Endothelial cell of umbilical vein (primary cell): ENCODE measurements at regions of chr7 and their contacts with region 1.

Region 1: GRCh38 chr7:636396-636795 is 90.1 kb upstream of the DNAAF5 start:
- DNase-seq: no peak
- H3K4me3 ChIP-seq: no peak overlapping the region
- H3K27ac ChIP-seq: no peak overlapping the region
- H3K4me1 ChIP-seq: no peaks in the 10 kb centered on the region
- H3K27me3 ChIP-seq: no peaks in the 10 kb centered on the region
- CTCF ChIP-seq: peak; percentile 47 to 51
- POLR2A ChIP-seq: no peak

Region 2: GRCh38 chr7:322111-322671 is 314.2 kb before region 1 on chr7:
- CTCF ChIA-PET with region 1: interaction called, 19 read pairs
- POLR2A ChIA-PET with region 1: no interaction called
- dilution Hi-C with region 1: no loop called
- intact Hi-C with region 1: loop called (anchors 1 kb)
- DNase-seq: peak; percentile 41
- H3K4me3 ChIP-seq: no peak overlapping the region
- H3K27ac ChIP-seq: no peak overlapping the region
- H3K4me1 ChIP-seq: no peaks in the 10 kb centered on the region
- H3K27me3 ChIP-seq: peaks cover 0 to 11% of the 10 kb centered on the region in 2 experiments
- CTCF ChIP-seq: peak; percentile 73 to 79
- POLR2A ChIP-seq: no peak

Region 3: DNA sequence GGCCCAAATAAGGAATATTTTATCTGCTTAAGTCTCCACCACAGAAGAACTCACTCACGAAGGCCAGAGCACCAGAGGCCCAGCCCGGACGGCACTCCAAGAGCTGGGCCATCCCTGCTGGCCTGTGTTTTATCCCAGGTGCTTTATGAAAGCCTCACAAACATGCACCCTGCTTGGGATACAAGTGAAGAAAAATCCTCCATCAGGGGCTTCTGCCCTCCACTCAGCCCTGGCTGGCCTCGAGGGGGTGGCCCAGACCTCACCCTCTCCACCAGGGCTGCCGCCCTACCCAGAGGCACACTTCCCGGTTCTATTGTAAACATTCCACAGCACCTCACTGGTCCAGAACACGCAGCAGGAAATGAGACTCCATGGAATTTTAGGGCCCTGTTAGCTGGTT is 70.3 kb after region 1 on chr7:
- CTCF ChIA-PET with region 1: no interaction called
- POLR2A ChIA-PET with region 1: no interaction called
- dilution Hi-C with region 1: no loop called
- intact Hi-C with region 1: no loop called
- DNase-seq: no peak
- H3K4me3 ChIP-seq: no peak overlapping the region
- H3K27ac ChIP-seq: no peak overlapping the region
- H3K4me1 ChIP-seq: peaks cover 6% of the 10 kb centered on the region
- H3K27me3 ChIP-seq: no peaks in the 10 kb centered on the region
- CTCF ChIP-seq: no peak
- POLR2A ChIP-seq: no peak

Region 4: DNA sequence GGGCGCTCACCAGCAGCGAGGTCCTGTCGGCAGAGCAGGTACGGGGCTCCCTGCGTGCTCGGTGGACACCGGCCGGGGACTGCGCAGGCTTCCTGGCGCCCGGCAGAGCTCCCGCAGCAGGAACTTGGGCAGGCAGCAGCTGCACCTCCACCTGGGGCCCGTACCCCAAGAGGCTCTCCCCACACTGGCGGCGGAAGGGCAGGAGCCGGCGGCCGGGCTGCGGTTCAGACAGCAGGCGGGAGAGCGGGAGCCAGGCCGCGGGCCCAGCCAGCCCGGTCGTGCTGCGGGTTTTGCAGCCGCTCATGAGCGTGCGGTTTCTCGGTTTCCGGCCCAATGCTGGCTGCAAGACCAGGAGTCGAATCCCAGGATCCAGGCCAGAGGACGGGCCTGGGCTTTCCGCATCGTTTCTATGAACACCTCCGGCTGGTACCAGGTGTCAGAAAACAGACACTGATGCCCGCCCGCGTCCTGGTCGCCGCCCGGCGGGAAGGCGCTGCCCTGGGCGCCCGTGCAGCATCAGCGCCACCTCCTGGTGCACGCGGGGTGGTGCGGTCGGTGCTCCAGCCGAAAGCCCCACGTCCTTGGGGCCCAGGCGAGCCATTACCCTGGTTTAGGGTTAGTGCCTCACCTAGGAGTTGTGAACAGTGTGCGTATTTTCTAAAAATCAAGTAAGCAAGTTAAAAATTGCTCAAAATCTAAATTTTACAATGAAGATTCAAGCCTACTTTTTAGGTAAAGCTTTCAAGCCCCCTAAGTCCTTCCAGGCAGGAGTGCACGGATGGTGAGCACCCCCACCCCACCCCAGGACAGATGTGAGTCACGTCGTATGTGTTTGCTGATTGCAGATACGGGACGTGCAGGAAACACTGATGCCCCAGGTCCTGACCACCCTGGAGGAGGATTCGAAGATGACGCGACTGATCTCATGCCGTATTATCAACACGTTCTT is 138.0 kb after region 1 on chr7:
- CTCF ChIA-PET with region 1: interaction called, 5 read pairs
- POLR2A ChIA-PET with region 1: no interaction called
- dilution Hi-C with region 1: no loop called
- intact Hi-C with region 1: loop called (anchors 10 kb)
- DNase-seq: peak; percentile 34
- H3K4me3 ChIP-seq: no peak overlapping the region
- H3K27ac ChIP-seq: no peak overlapping the region
- H3K4me1 ChIP-seq: peaks cover 39% of the 10 kb centered on the region
- H3K27me3 ChIP-seq: no peaks in the 10 kb centered on the region
- CTCF ChIP-seq: peak; percentile 91 to 93
- POLR2A ChIP-seq: no peak

Region 5: GRCh38 chr7:867672-868486 is 231.5 kb after region 1 on chr7:
- CTCF ChIA-PET with region 1: no interaction called
- POLR2A ChIA-PET with region 1: no interaction called
- dilution Hi-C with region 1: no loop called
- intact Hi-C with region 1: no loop called
- DNase-seq: peak; percentile 69
- H3K4me3 ChIP-seq: no peak overlapping the region
- H3K27ac ChIP-seq: peak overlapping the region; percentile 78
- H3K4me1 ChIP-seq: peaks cover 10% of the 10 kb centered on the region
- H3K27me3 ChIP-seq: no peaks in the 10 kb centered on the region
- CTCF ChIP-seq: no peak
- POLR2A ChIP-seq: no peak